Mammary epithelial cell (primary cell): ENCODE measurements at regions of chr17 and their contacts with region 1.

Region 1: DNA sequence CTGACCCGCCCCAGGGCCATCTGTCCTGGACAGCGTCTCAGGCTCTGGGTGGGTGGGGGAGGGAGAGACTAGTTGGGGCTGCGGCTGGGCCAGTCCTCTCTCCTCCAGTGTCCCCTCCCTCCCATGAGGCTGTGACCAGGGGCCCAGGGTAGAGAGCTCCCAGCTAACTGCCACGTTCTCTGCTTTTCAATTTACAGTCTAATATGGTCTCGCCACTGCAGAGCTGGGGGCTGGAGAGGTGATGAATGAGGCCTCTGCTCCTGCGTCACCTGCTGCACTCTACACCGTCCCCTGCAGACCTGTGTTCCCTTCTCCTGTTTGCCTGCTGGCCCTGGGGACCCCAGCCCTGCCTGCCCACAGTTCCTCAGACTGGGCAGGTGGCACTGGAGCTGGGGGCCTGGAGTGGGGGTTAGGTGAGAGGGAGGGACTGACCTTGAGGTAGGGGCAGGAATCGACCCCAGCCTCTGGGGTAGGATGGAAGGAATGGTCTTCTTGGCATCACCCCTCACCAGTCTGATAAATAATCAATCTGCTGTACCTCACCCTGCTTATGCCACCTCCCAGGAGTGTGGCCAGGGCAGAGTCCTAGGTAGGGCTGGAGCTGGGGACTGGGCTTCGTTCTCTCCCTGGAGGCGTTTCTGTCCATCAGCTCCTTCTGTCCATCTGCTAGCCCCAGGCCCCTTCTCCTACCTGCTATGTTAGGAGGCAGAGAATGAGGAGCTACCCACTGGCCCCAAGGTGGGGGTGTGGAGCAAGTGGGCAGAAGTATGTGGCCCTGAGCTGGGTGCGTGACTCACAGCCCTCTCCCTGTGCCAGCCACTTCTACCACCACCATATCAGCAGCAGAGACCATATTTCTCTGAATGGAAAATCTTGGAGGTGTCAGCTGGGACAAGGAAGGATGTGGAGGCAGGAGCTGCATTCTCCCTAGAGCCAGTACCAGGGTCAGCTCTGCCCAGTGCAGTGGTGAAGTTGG is 12.9 kb downstream of the SEZ6 start:
- DNase-seq: peak; percentile 14
- H3K4me3 ChIP-seq: no peak overlapping the region
- H3K27ac ChIP-seq: no peak overlapping the region
- H3K4me1 ChIP-seq: peaks cover 6% of the 10 kb centered on the region
- H3K27me3 ChIP-seq: peaks cover 1% of the 10 kb centered on the region
- CTCF ChIP-seq: peak in 1 of 2 donors; percentile 10

Region 2: DNA sequence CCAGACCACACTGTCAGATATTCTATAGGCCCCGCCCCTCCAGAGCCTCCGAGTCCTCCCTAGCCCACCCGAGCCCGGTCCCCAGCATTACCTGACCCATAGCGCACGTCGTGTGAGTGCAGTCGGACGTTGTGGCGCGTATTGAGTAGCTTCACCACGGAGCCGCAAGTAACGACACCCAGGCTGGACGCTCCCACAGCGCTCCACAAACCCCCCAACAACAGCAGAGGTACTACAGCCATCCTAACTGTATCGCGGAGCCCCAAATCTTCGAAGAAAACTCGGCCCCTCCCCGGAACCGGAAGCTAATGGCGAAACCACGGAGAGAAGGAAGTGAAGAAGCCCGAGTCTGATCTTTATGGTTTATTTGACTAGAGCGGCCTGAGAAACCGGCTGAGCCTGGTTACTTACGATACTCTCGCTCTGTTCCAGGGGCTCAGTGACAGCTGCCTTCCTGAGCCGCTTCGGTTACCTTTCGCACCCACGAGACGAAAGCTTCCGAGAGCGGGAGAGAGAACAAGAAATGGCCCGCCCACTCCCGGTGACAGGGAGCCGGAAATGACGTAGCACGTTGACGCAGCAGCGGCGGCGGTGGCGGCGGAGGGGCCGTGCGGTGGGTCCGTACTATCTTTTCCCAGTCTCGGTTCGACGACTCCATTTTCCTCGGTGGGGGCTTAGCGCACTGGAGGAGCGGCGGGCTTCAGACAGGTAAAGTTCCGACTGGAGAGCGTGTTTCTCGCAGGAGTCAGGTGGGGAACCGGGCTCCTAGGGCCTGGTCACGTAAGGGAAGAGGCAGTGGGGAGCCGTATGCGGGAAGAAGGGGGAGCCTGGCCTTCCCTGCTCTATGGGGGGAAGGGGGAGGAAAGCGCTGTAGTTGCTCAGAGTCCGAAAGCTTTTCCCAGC is 331.0 kb before region 1 on chr17 and contains the starts of genes SDF2 and SUPT6H:
- CTCF ChIA-PET with region 1: no interaction called
- dilution Hi-C with region 1: no loop called
- in situ Hi-C with region 1: no loop called
- intact Hi-C with region 1: no loop called
- DNase-seq: peak; percentile 85
- H3K4me3 ChIP-seq: peak within 1 kb of the TSS; percentile 96 to 99 (median 96)
- H3K27ac ChIP-seq: peak within 1 kb of the TSS; percentile 95
- H3K4me1 ChIP-seq: peaks cover 16% of the 10 kb centered on the region
- H3K27me3 ChIP-seq: no peaks in the 10 kb centered on the region
- CTCF ChIP-seq: no peak
- total RNA-seq, gene SDF2: 37.7 to 37.8 TPM
- total RNA-seq, gene SUPT6H: 51.7 to 78.9 TPM

Region 3: GRCh38 chr17:28828294-28829040 is 164.4 kb before region 1 on chr17:
- CTCF ChIA-PET with region 1: no interaction called
- dilution Hi-C with region 1: no loop called
- in situ Hi-C with region 1: no loop called
- intact Hi-C with region 1: no loop called
- DNase-seq: no peak
- H3K4me3 ChIP-seq: no peak overlapping the region
- H3K27ac ChIP-seq: no peak overlapping the region
- H3K4me1 ChIP-seq: no peaks in the 10 kb centered on the region
- H3K27me3 ChIP-seq: no peaks in the 10 kb centered on the region
- CTCF ChIP-seq: no peak

Region 4: GRCh38 chr17:28953444-28954118 is 39.3 kb before region 1 on chr17:
- CTCF ChIA-PET with region 1: no interaction called
- dilution Hi-C with region 1: no loop called
- in situ Hi-C with region 1: no loop called
- intact Hi-C with region 1: no loop called
- DNase-seq: peak; percentile 19
- H3K4me3 ChIP-seq: no peak overlapping the region
- H3K27ac ChIP-seq: no peak overlapping the region
- H3K4me1 ChIP-seq: peaks cover 5% of the 10 kb centered on the region
- H3K27me3 ChIP-seq: no peaks in the 10 kb centered on the region
- CTCF ChIP-seq: peak; percentile 82 to 86

Region 5: GRCh38 chr17:28972437-28972836 is 20.5 kb before region 1 on chr17:
- CTCF ChIA-PET with region 1: no interaction called
- dilution Hi-C with region 1: no loop called
- in situ Hi-C with region 1: no loop called
- intact Hi-C with region 1: no loop called
- DNase-seq: no peak
- H3K4me3 ChIP-seq: no peak overlapping the region
- H3K27ac ChIP-seq: no peak overlapping the region
- H3K4me1 ChIP-seq: no peaks in the 10 kb centered on the region
- H3K27me3 ChIP-seq: peaks cover 2% of the 10 kb centered on the region
- CTCF ChIP-seq: no peak

Region 6: GRCh38 chr17:29069526-29070041 is 76.7 kb after region 1 on chr17:
- CTCF ChIA-PET with region 1: no interaction called
- dilution Hi-C with region 1: no loop called
- in situ Hi-C with region 1: no loop called
- intact Hi-C with region 1: loop called (anchors 5 kb)
- DNase-seq: peak; percentile 48
- H3K4me3 ChIP-seq: no peak overlapping the region
- H3K27ac ChIP-seq: no peak overlapping the region
- H3K4me1 ChIP-seq: peaks cover 8% of the 10 kb centered on the region
- H3K27me3 ChIP-seq: no peaks in the 10 kb centered on the region
- CTCF ChIP-seq: no peak